ENCODE measurements at regions of chr5 and their contacts with region 1.

Region 1: GRCh38 chr5:30804739-30805505 is 388.6 kb upstream of the CDH6 start:
- DNase-seq: no peak
- ATAC-seq: no peak
- H3K4me3 ChIP-seq: no peak overlapping the region
- H3K4me3 Mint-ChIP-seq: no peak overlapping the region
- H3K27ac ChIP-seq: no peak overlapping the region
- H3K27ac Mint-ChIP-seq: no peak overlapping the region
- H3K4me1 ChIP-seq: no peaks in the 10 kb centered on the region
- H3K4me1 Mint-ChIP-seq: no peaks in the 10 kb centered on the region
- H3K27me3 ChIP-seq: no peaks in the 10 kb centered on the region
- H3K27me3 Mint-ChIP-seq: no peaks in the 10 kb centered on the region
- CTCF ChIP-seq: no peak

Region 2: DNA sequence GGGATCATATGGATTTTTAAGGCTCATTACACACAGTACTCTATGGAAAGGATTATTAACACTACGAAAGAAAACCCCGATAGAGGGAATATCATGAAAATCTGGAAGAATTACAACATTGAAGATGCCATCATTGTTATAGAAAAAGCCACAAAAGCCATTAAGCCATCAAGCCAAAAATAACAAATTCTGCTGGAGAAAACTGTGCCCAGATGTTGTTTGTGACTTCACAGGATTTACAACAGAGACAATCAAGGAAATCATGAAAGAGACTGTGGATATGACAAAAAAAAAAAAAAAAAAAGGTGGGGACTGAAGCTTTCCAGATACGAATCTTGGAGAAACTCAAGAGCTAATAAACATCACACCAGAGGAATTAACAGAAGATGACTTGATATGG is 45.2 kb before region 1 on chr5:
- CTCF ChIA-PET with region 1: no interaction called
- POLR2A ChIA-PET with region 1: no interaction called
- intact Hi-C with region 1: loop called in 1 of 2 experiments (anchors 1 kb)
- DNase-seq: no peak
- ATAC-seq: no peak
- H3K4me3 ChIP-seq: no peak overlapping the region
- H3K4me3 Mint-ChIP-seq: no peak overlapping the region
- H3K27ac ChIP-seq: no peak overlapping the region
- H3K27ac Mint-ChIP-seq: no peak overlapping the region
- H3K4me1 ChIP-seq: no peaks in the 10 kb centered on the region
- H3K4me1 Mint-ChIP-seq: no peaks in the 10 kb centered on the region
- H3K27me3 ChIP-seq: no peaks in the 10 kb centered on the region
- H3K27me3 Mint-ChIP-seq: no peaks in the 10 kb centered on the region
- CTCF ChIP-seq: no peak